Esophagus muscularis mucosa (tissue), 4 donors: ENCODE measurements at regions of chr4 and their contacts with region 1.

Region 1: GRCh38 chr4:99462875-99463464 is 27.8 kb upstream of the ADH7 start:
- DNase-seq: no peak
- H3K4me3 ChIP-seq: no peak overlapping the region
- H3K27ac ChIP-seq: no peak overlapping the region
- H3K4me1 ChIP-seq: peaks cover 0 to 8% (median 0%) of the 10 kb centered on the region in 4 donors
- H3K27me3 ChIP-seq: no peaks in the 10 kb centered on the region
- CTCF ChIP-seq: peak; percentile 74 to 86 (median 78)
- EP300 ChIP-seq: no peak
- POLR2A ChIP-seq: no peak

Region 2: GRCh38 chr4:98467627-98468072 is 995.3 kb before region 1 on chr4:
- intact Hi-C with region 1: loop called (anchors 10 kb)
- DNase-seq: no peak
- H3K4me3 ChIP-seq: peak overlapping the region; percentile 39 to 55 (median 41)
- H3K27ac ChIP-seq: no peak overlapping the region
- H3K4me1 ChIP-seq: peaks cover 0 to 22% (median 17%) of the 10 kb centered on the region in 4 donors
- H3K27me3 ChIP-seq: no peaks in the 10 kb centered on the region
- CTCF ChIP-seq: peak; percentile 73 to 80 (median 76)
- EP300 ChIP-seq: no peak
- POLR2A ChIP-seq: no peak

Region 3: GRCh38 chr4:98928505-98929340 is 534.2 kb before region 1 on chr4 and contains the start of gene EIF4E:
- intact Hi-C with region 1: loop called (anchors 10 kb)
- DNase-seq: peak; percentile 98
- H3K4me3 ChIP-seq: peak within 1 kb of the TSS; percentile 96 to 99 (median 97)
- H3K27ac ChIP-seq: peak within 1 kb of the TSS; percentile 92 to 97 (median 94)
- H3K4me1 ChIP-seq: peaks cover 10 to 44% (median 25%) of the 10 kb centered on the region in 4 donors
- H3K27me3 ChIP-seq: no peaks in the 10 kb centered on the region
- CTCF ChIP-seq: peak in 1 of 3 experiments; percentile 3
- EP300 ChIP-seq: no peak
- POLR2A ChIP-seq: no peak
- total RNA-seq, gene EIF4E: 67.7 to 84.3 (median 76.5) TPM

Region 4: GRCh38 chr4:99054428-99054994 is 408.5 kb before region 1 on chr4:
- intact Hi-C with region 1: loop called (anchors 10 kb)
- DNase-seq: no peak
- H3K4me3 ChIP-seq: no peak overlapping the region
- H3K27ac ChIP-seq: no peak overlapping the region
- H3K4me1 ChIP-seq: peaks cover 6 to 12% (median 9%) of the 10 kb centered on the region in 4 donors
- H3K27me3 ChIP-seq: no peaks in the 10 kb centered on the region
- CTCF ChIP-seq: no peak
- EP300 ChIP-seq: no peak
- POLR2A ChIP-seq: no peak

Region 5: GRCh38 chr4:99117876-99118693 is 344.9 kb before region 1 on chr4:
- intact Hi-C with region 1: loop called (anchors 5 kb)
- DNase-seq: no peak
- H3K4me3 ChIP-seq: no peak overlapping the region
- H3K27ac ChIP-seq: no peak overlapping the region
- H3K4me1 ChIP-seq: peaks cover 0 to 24% (median 7%) of the 10 kb centered on the region in 4 donors
- H3K27me3 ChIP-seq: no peaks in the 10 kb centered on the region
- CTCF ChIP-seq: peak in 2 of 3 experiments; percentile 32 to 41
- EP300 ChIP-seq: no peak
- POLR2A ChIP-seq: no peak

Region 6: GRCh38 chr4:99156992-99157391 is 306.0 kb before region 1 on chr4:
- intact Hi-C with region 1: no loop called
- DNase-seq: no peak
- H3K4me3 ChIP-seq: no peak overlapping the region
- H3K27ac ChIP-seq: no peak overlapping the region
- H3K4me1 ChIP-seq: no peaks in the 10 kb centered on the region
- H3K27me3 ChIP-seq: no peaks in the 10 kb centered on the region
- CTCF ChIP-seq: no peak
- EP300 ChIP-seq: no peak
- POLR2A ChIP-seq: no peak

Region 7: GRCh38 chr4:99201690-99202089 is 261.3 kb before region 1 on chr4:
- intact Hi-C with region 1: loop called (anchors 5 kb)
- DNase-seq: no peak
- H3K4me3 ChIP-seq: no peak overlapping the region
- H3K27ac ChIP-seq: peak overlapping the region; percentile 47 to 63 (median 58)
- H3K4me1 ChIP-seq: peaks cover 11 to 21% (median 15%) of the 10 kb centered on the region in 4 donors
- H3K27me3 ChIP-seq: no peaks in the 10 kb centered on the region
- CTCF ChIP-seq: peak; percentile 29 to 37 (median 31)
- EP300 ChIP-seq: no peak
- POLR2A ChIP-seq: no peak

Region 8: DNA sequence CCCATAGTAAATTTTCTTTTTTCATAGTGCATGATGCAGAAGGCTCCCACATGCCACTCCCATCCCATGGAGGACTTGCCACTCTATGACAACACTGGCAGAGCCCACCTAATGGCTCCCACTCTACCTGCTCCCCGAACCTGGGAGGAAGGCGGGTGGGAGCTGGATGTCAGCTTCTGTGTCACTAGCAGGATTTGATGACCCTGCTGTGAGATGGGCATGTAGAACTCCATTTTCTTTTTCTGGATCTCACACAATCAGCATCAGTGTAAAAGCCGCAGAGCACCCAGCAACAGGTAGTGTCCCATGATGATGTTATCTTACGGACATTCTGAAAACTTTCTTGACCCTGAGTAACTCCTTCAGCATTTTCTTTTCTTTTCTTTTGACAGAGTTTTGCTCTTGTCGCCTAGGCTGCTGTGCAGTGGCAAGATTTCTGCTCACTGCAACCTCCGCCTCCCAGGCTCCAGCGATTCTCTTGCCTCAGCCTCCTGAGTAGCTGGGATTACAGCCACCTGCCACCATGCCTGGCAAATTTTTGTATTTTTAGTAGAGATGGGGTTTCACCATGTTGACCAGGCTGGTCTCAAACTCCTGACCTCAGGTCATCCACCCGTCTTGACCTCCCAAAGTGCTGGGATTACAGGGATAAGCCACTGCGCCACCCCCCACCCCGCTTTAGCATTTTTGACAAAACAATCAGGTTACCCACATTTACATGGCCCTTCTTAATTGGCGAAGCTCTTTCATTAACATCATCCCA is 157.2 kb before region 1 on chr4:
- intact Hi-C with region 1: no loop called
- DNase-seq: no peak
- H3K4me3 ChIP-seq: no peak overlapping the region
- H3K27ac ChIP-seq: no peak overlapping the region
- H3K4me1 ChIP-seq: peaks cover 5 to 15% (median 10%) of the 10 kb centered on the region in 4 donors
- H3K27me3 ChIP-seq: no peaks in the 10 kb centered on the region
- CTCF ChIP-seq: no peak
- EP300 ChIP-seq: no peak
- POLR2A ChIP-seq: no peak

Region 9: GRCh38 chr4:99405433-99406115 is 57.4 kb before region 1 on chr4:
- intact Hi-C with region 1: no loop called
- DNase-seq: no peak
- H3K4me3 ChIP-seq: peak overlapping the region in 1 of 4 donors; percentile 19
- H3K27ac ChIP-seq: peak overlapping the region; percentile 58 to 74 (median 70)
- H3K4me1 ChIP-seq: peaks cover 19 to 75% (median 63%) of the 10 kb centered on the region in 4 donors
- H3K27me3 ChIP-seq: no peaks in the 10 kb centered on the region
- CTCF ChIP-seq: peak; percentile 90 to 96 (median 95)
- EP300 ChIP-seq: no peak
- POLR2A ChIP-seq: no peak